ENCODE measurements at regions of chr2 and their contacts with region 1.

Region 1: GRCh38 chr2:10750610-10751009 is 29.2 kb downstream of the ATP6V1C2 start:
- DNase-seq: no peak
- H3K4me3 ChIP-seq: no peak overlapping the region
- H3K4me3 Mint-ChIP-seq: no peak overlapping the region
- H3K27ac Mint-ChIP-seq: peak overlapping the region; percentile 30
- H3K4me1 ChIP-seq: peaks cover 31% of the 10 kb centered on the region
- H3K4me1 Mint-ChIP-seq: peaks cover 27% of the 10 kb centered on the region
- H3K27me3 ChIP-seq: no peaks in the 10 kb centered on the region
- H3K27me3 Mint-ChIP-seq: no peaks in the 10 kb centered on the region
- CTCF ChIP-seq: no peak

Region 2: DNA sequence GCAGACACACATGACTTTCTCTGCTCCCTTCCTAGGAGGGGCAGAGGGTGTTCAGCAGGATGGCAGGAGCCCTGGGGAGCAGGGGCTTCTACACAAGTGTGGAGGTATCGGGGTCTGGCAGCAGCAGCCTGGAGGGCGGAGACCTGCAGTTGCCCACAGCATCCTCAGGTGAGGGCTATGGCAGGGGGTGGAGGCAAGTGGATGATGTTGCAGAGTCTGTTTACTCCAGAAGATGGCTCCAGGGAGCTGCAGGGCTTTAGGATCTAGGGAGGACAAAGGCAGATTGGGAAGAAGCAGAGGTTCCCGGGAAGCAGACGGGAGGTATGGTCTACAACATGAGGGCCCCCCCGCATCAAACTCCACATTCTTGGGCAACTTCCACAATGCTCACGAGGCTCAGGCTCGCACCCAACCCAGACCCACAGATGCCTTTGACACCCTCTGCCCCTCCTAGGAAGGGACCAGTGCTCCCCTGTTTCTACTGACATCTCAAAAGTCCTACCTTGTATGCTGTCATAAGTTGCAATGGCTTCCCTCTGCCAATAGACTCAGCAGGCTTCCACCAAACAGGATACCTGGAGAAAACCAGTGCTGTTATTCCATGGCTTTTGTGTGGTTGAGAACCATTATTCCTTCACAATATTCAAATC is 41.2 kb before region 1 on chr2:
- CTCF ChIA-PET with region 1: no interaction called
- POLR2A ChIA-PET with region 1: no interaction called
- intact Hi-C with region 1: loop called (anchors 2 kb)
- DNase-seq: peak; percentile 72 to 78
- H3K4me3 ChIP-seq: no peak overlapping the region
- H3K4me3 Mint-ChIP-seq: peak overlapping the region; percentile 17
- H3K27ac Mint-ChIP-seq: no peak overlapping the region
- H3K4me1 ChIP-seq: no peaks in the 10 kb centered on the region
- H3K4me1 Mint-ChIP-seq: peaks cover 12% of the 10 kb centered on the region
- H3K27me3 ChIP-seq: no peaks in the 10 kb centered on the region
- H3K27me3 Mint-ChIP-seq: peaks cover 9% of the 10 kb centered on the region
- CTCF ChIP-seq: peak; percentile 61 to 87

Region 3: DNA sequence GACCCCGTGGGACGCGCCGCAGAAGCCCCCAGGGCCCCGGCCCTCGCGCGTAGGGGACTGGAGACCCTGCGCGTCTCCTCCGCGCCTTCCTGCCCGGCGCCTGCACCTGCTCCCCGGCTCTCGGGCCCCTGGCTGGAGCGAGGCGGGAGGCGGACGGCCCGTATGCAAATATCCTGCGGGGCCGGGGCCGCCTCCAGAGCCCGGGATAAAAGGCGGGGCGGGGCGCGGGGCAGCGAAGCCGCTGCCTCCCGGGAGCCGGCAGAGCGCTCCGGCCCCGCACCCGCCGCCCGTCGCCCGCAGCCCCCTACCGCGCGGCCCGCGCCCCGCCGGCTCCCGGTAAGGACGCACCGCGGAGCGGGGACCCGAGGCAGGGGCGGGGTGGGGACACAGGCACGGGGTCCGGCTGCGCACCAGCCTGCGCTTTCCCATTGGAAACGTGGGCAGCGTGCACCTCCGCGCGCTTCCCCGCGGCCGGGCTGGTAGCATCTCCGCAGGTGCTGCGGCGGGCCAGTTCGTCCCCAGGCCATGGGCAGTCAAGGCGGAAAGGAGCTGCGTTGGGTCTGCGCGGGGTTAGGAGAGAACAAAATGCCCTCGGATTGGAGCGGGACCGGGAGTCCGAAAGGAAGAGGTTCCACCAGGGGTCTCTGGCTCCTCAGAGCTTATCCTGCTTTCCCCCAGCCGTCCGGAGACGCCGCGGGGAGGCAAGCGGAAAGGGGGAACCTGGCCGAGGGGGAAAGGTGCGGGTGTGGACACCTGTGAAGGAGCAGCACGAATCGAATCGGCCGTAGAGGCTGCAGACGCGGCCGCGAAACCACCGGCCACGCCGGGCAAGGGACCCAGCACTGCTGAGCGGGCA is 29.0 kb before region 1 on chr2 and contains the start of gene ATP6V1C2:
- CTCF ChIA-PET with region 1: no interaction called
- POLR2A ChIA-PET with region 1: no interaction called
- intact Hi-C with region 1: loop called (anchors 1 kb)
- DNase-seq: peak; percentile 64 to 86
- H3K4me3 ChIP-seq: peak within 1 kb of the TSS; percentile 57
- H3K4me3 Mint-ChIP-seq: peak within 1 kb of the TSS; percentile 83
- H3K27ac Mint-ChIP-seq: no peak within 1 kb of the TSS
- H3K4me1 ChIP-seq: peaks cover 30% of the 10 kb centered on the region
- H3K4me1 Mint-ChIP-seq: peaks cover 23% of the 10 kb centered on the region
- H3K27me3 ChIP-seq: peaks cover 11% of the 10 kb centered on the region
- H3K27me3 Mint-ChIP-seq: peaks cover 15% of the 10 kb centered on the region
- CTCF ChIP-seq: peak in 1 of 2 experiments; percentile 14
- total RNA-seq, gene ATP6V1C2: 4.2 and 4.8 TPM in 2 replicates

Region 4: GRCh38 chr2:10738192-10738591 is 12.4 kb before region 1 on chr2:
- CTCF ChIA-PET with region 1: no interaction called
- POLR2A ChIA-PET with region 1: no interaction called
- intact Hi-C with region 1: loop called (anchors 1 kb)
- DNase-seq: peak; percentile 68 to 76
- H3K4me3 ChIP-seq: no peak overlapping the region
- H3K4me3 Mint-ChIP-seq: peak overlapping the region; percentile 34
- H3K27ac Mint-ChIP-seq: peak overlapping the region; percentile 87
- H3K4me1 ChIP-seq: peaks cover 25% of the 10 kb centered on the region
- H3K4me1 Mint-ChIP-seq: peaks cover 27% of the 10 kb centered on the region
- H3K27me3 ChIP-seq: no peaks in the 10 kb centered on the region
- H3K27me3 Mint-ChIP-seq: no peaks in the 10 kb centered on the region
- CTCF ChIP-seq: no peak

Region 5: GRCh38 chr2:10765461-10765860 is 14.9 kb after region 1 on chr2:
- CTCF ChIA-PET with region 1: no interaction called
- POLR2A ChIA-PET with region 1: no interaction called
- intact Hi-C with region 1: loop called (anchors 1 kb)
- DNase-seq: peak; percentile 86 to 95
- H3K4me3 ChIP-seq: no peak overlapping the region
- H3K4me3 Mint-ChIP-seq: peak overlapping the region; percentile 64
- H3K27ac Mint-ChIP-seq: peak overlapping the region; percentile 99
- H3K4me1 ChIP-seq: peaks cover 26% of the 10 kb centered on the region
- H3K4me1 Mint-ChIP-seq: peaks cover 15% of the 10 kb centered on the region
- H3K27me3 ChIP-seq: no peaks in the 10 kb centered on the region
- H3K27me3 Mint-ChIP-seq: no peaks in the 10 kb centered on the region
- CTCF ChIP-seq: peak in 1 of 2 experiments; percentile 11

Region 6: GRCh38 chr2:10812362-10813162 is 62.0 kb after region 1 on chr2 and contains the start of gene PDIA6:
- CTCF ChIA-PET with region 1: no interaction called
- POLR2A ChIA-PET with region 1: no interaction called
- intact Hi-C with region 1: loop called (anchors 5 kb)
- DNase-seq: peak; percentile 98 to 99
- H3K4me3 ChIP-seq: peak within 1 kb of the TSS; percentile 83
- H3K4me3 Mint-ChIP-seq: peak within 1 kb of the TSS; percentile 81
- H3K27ac Mint-ChIP-seq: peak within 1 kb of the TSS; percentile 83
- H3K4me1 ChIP-seq: peaks cover 8% of the 10 kb centered on the region; the same call in 1 of the 2 replicates
- H3K4me1 Mint-ChIP-seq: peaks cover 22% of the 10 kb centered on the region
- H3K27me3 ChIP-seq: no peaks in the 10 kb centered on the region
- H3K27me3 Mint-ChIP-seq: peaks cover 5% of the 10 kb centered on the region
- CTCF ChIP-seq: no peak
- total RNA-seq, gene PDIA6: 379 and 384 TPM in 2 replicates

Region 7: DNA sequence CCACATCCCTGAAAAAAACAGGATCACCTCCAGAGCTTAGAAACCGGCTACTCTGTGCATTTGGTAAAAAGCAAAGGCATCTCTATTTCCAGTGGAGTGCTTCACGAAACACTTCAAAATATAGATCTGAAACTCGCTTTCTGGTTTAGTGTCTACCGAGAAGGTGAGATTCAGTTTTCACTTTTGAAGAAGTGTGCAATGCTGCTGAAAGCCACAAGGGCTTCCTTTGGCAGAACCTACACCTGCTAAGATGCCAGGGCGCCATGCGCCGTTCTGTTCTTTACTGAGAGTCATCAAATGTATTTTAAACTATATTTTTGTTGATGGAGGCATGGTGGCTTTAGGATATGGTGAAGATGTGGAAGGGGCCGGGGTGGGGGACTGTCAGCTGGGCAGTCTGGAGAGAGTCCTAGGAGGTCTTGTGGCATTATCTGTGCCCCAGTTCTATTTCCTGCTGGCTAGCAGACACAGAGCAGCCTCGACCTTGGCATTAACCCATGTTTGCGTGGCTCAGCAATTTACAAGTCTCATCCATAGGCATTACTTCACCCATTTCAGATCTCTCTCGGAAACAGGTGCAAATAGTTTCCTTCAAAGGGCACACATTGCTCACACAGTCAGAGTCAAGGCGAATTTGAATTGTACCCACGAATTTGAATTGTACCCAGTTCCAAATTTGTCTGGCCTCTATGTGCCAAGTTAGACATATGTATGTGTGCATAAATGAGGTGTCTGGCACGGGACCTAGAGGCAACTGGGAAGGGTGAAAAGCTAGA is 114.4 kb after region 1 on chr2:
- CTCF ChIA-PET with region 1: no interaction called
- POLR2A ChIA-PET with region 1: no interaction called
- intact Hi-C with region 1: no loop called
- DNase-seq: no peak
- H3K4me3 ChIP-seq: no peak overlapping the region
- H3K4me3 Mint-ChIP-seq: no peak overlapping the region
- H3K27ac Mint-ChIP-seq: no peak overlapping the region
- H3K4me1 ChIP-seq: no peaks in the 10 kb centered on the region
- H3K4me1 Mint-ChIP-seq: no peaks in the 10 kb centered on the region
- H3K27me3 ChIP-seq: no peaks in the 10 kb centered on the region
- H3K27me3 Mint-ChIP-seq: peaks cover 5% of the 10 kb centered on the region
- CTCF ChIP-seq: peak in 1 of 2 experiments; percentile 26